ENCODE measurements at regions of chr17 and their contacts with region 1.

Region 1: GRCh38 chr17:2416010-2416734 is 15.3 kb upstream of the MNT start:
- H3K4me3 ChIP-seq: no peak overlapping the region
- H3K27ac ChIP-seq: no peak overlapping the region
- H3K4me1 ChIP-seq: no peaks in the 10 kb centered on the region
- CTCF ChIP-seq: peak; percentile 65

Region 2: GRCh38 chr17:1958134-1958881 is 457.9 kb before region 1 on chr17:
- CTCF ChIA-PET with region 1: no interaction called
- POLR2A ChIA-PET with region 1: no interaction called
- H3K4me3 ChIP-seq: no peak overlapping the region
- H3K27ac ChIP-seq: no peak overlapping the region
- H3K4me1 ChIP-seq: peaks cover 9% of the 10 kb centered on the region; the same call in 1 of the 2 replicates
- CTCF ChIP-seq: no peak

Region 3: GRCh38 chr17:2361010-2361760 is 55.0 kb before region 1 on chr17:
- CTCF ChIA-PET with region 1: interaction called, 12 read pairs
- POLR2A ChIA-PET with region 1: no interaction called
- H3K4me3 ChIP-seq: no peak overlapping the region
- H3K27ac ChIP-seq: no peak overlapping the region
- H3K4me1 ChIP-seq: peaks cover 9% of the 10 kb centered on the region
- CTCF ChIP-seq: no peak

Region 4: DNA sequence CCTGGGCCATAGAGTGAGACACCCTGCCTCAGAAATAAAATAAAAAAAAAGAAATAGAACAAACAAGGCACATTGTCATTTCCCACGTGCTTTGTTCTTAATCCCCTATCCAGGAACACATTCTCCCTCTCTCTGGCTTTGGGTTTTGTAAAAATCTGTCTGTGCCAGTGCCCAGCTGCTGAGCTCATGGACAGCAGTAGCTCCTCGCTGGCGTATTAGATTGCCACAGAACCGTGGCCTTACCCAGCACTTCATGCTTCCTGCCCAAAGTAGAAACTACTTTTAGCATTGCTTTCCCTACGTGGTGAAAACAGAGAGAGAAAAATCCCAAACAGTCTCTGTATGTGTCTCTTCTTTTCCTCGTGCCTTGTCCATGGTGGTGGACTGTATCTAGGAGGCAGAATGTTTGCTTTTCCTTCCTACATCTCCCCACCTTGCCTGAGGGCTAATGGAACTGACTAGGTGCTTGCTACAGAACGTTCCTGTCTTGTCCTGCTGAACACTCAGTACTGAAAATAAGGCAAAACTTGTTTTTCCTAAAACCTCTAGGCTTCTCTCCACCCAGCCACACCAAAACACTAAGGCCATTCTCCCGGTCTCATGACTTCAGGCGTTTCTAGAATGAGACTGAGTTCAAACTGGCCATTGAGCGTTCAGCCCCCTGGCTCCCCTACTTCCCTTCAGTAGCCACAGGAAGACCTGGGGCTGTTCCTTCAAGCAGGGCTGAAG is 41.5 kb before region 1 on chr17:
- CTCF ChIA-PET with region 1: interaction called, 470 read pairs
- POLR2A ChIA-PET with region 1: no interaction called
- H3K4me3 ChIP-seq: no peak overlapping the region
- H3K27ac ChIP-seq: no peak overlapping the region
- H3K4me1 ChIP-seq: no peaks in the 10 kb centered on the region
- CTCF ChIP-seq: no peak

Region 5: GRCh38 chr17:2386400-2387085 is 29.6 kb before region 1 on chr17:
- CTCF ChIA-PET with region 1: interaction called, 470 read pairs
- POLR2A ChIA-PET with region 1: interaction called, 42 read pairs
- H3K4me3 ChIP-seq: no peak overlapping the region
- H3K27ac ChIP-seq: no peak overlapping the region
- H3K4me1 ChIP-seq: peaks cover 14% of the 10 kb centered on the region
- CTCF ChIP-seq: no peak

Region 6: GRCh38 chr17:2427215-2427614 is 11.0 kb after region 1 on chr17:
- CTCF ChIA-PET with region 1: interaction called, 58 read pairs
- POLR2A ChIA-PET with region 1: no interaction called
- H3K4me3 ChIP-seq: no peak overlapping the region
- H3K27ac ChIP-seq: no peak overlapping the region
- H3K4me1 ChIP-seq: no peaks in the 10 kb centered on the region
- CTCF ChIP-seq: no peak

Region 7: DNA sequence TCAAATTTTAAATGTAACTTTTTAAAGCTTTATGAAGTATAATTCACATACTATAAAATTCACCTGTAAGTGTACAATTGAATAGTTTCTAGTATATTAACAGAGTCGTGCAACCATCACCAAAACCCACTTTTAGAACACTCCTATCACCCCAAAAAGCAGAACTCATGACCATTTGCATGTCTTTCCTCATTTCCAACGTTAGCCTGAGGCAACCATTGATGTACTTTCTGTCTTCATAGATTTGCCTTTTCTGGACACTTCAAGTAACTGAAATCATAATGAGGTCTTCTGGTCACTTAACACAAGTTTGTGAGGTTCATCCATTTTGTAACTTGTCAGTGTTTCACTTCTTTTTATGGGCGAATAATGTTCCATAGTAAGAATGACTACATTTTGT is 62.3 kb after region 1 on chr17:
- CTCF ChIA-PET with region 1: no interaction called
- POLR2A ChIA-PET with region 1: no interaction called
- H3K4me3 ChIP-seq: no peak overlapping the region
- H3K27ac ChIP-seq: no peak overlapping the region
- H3K4me1 ChIP-seq: peaks cover 13% of the 10 kb centered on the region
- CTCF ChIP-seq: no peak

Region 8: DNA sequence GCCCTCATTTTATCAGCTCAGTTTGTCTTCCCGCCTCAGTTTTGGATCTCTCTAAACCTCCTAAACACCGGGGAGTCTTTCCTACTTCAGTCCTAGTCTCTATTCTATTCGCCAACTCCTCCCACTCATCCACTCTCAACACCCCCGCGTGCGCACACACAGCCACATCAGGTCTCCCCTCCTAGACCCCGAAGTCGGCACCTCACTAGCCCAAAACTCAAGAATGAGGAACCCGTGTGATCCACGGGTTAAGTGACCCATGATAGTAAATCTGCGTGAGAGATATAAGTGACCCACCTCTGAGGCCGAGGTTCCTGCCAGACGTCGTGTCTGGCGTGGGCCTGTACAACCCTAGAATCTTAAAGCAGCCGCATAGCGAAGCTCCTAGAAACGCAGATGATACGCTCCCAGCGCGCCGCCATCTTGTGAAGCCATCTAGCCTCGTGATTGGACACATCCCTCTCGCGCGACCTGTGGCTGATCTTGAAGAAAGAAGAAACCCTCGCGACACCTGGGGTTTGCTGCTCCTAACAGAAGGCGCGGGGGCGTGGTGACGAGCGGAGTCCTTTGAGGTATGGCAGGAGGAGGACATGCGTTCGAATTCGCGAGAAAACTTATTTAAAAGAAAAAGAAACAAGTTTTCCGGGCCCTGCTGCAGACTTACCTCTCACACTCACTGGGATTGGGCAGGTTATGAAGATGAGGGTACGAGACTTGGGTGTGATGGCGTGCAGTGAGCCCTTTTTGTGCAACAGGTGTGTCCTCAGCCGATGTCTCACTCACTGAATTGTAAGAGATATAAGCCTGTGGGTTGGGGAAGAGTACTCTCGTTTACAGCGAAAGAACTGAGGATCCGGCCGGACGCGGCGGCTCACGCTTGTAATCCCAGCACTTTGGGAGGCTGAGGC is 95.5 kb after region 1 on chr17 and contains the start of gene METTL16:
- CTCF ChIA-PET with region 1: interaction called, 11 read pairs
- POLR2A ChIA-PET with region 1: interaction called, 6 read pairs
- H3K4me3 ChIP-seq: peak within 1 kb of the TSS; percentile 67
- H3K27ac ChIP-seq: peak within 1 kb of the TSS; percentile 94
- H3K4me1 ChIP-seq: no peaks in the 10 kb centered on the region
- CTCF ChIP-seq: no peak

Region 9: DNA sequence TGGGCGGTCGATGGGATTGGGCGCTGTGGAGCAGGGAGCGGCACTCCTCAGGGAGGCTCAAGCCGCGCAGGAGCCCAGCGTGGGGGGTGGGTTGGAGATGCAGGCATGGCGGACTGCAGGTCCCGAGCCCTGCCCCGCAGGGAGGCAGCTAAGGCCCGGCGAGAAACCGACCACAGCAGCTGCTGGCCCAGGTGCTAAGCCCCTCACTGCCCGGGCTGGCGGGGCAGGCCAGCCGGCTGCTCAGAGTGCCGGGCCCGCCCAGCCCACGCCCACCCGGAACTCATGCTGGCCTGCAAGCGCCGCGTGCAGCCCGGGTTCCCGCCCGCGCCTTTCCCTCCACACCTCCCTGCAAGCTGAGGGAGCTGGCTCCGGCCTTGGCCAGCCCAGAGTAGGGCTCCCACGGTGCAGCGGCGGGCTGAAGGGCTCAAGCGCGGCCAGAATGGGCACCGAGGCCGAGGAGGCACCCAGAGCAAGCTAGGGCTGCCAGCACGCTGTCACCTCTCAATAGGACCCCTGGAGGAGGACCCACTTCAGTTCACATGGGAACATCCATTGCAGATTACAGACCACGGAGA is 116.1 kb after region 1 on chr17:
- CTCF ChIA-PET with region 1: no interaction called
- POLR2A ChIA-PET with region 1: no interaction called
- H3K4me3 ChIP-seq: no peak overlapping the region
- H3K27ac ChIP-seq: no peak overlapping the region
- H3K4me1 ChIP-seq: no peaks in the 10 kb centered on the region
- CTCF ChIP-seq: no peak

Measured in HEK293 (cell line).